Activated CD4-positive, alpha-beta memory T cell treated with anti-CD3 and anti-CD28 coated beads, Interleukin-2, amount 10 ng/mL, durations not matched to agents 7 days and 5 days (primary cell): ENCODE measurements at regions of chr22 and their contacts with region 1.

Region 1: DNA sequence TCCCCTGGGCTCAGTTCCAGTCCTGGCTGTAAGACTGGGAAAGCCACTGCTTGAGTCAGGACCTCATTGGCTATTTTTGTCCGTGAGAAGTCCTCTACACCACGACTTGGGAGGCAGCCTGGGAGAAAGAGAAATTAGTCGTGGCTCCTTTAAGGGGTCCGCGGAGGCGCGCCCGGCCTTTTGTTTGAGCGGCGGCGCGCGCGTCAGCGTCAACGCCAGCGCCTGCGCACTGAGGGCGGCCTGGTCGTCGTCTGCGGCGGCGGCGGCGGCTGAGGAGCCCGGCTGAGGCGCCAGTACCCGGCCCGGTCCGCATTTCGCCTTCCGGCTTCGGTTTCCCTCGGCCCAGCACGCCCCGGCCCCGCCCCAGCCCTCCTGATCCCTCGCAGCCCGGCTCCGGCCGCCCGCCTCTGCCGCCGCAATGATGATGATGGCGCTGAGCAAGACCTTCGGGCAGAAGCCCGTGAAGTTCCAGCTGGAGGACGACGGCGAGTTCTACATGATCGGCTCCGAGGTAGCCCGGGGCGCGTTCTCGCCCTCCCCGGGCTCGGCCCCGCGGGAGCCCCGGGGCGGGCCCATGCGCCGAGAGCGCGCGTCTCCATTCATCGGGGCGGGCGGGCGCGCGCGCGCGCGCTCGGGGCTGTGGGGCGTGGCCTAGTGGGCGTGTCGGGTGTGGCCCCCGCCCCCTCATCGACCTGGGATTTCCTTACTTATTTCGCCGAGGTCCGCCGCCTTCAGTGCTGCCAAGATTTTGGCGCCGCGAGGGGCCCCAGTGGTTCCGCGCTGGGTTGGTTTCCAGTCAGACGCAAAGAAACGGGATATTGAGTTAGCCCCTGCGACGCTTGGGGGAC is at the start of gene SMARCB1:
- DNase-seq: peak; percentile 92
- H3K4me3 Mint-ChIP-seq: peak within 1 kb of the TSS; percentile 88
- H3K27ac Mint-ChIP-seq: peak within 1 kb of the TSS; percentile 91
- H3K4me1 Mint-ChIP-seq: peaks cover 37% of the 10 kb centered on the region
- H3K27me3 Mint-ChIP-seq: no peaks in the 10 kb centered on the region
- total RNA-seq, gene SMARCB1: 65.6 to 66.9 TPM

Region 2: GRCh38 chr22:23774743-23775566 is 12.0 kb before region 1 on chr22:
- CTCF ChIA-PET with region 1: interaction called, 4 read pairs
- POLR2A ChIA-PET with region 1: interaction called, 17 read pairs
- DNase-seq: no peak
- H3K4me3 Mint-ChIP-seq: no peak overlapping the region
- H3K27ac Mint-ChIP-seq: no peak overlapping the region
- H3K4me1 Mint-ChIP-seq: peaks cover 18% of the 10 kb centered on the region
- H3K27me3 Mint-ChIP-seq: peaks cover 16% of the 10 kb centered on the region

Region 3: GRCh38 chr22:23800297-23801237 is 13.6 kb after region 1 on chr22:
- CTCF ChIA-PET with region 1: no interaction called
- POLR2A ChIA-PET with region 1: no interaction called
- DNase-seq: no peak
- H3K4me3 Mint-ChIP-seq: no peak overlapping the region
- H3K27ac Mint-ChIP-seq: no peak overlapping the region
- H3K4me1 Mint-ChIP-seq: no peaks in the 10 kb centered on the region
- H3K27me3 Mint-ChIP-seq: no peaks in the 10 kb centered on the region

Region 4: GRCh38 chr22:23820748-23821211 is 33.8 kb after region 1 on chr22:
- CTCF ChIA-PET with region 1: no interaction called
- POLR2A ChIA-PET with region 1: interaction called, 14 read pairs
- DNase-seq: peak; percentile 67
- H3K4me3 Mint-ChIP-seq: no peak overlapping the region
- H3K27ac Mint-ChIP-seq: peak overlapping the region; percentile 91
- H3K4me1 Mint-ChIP-seq: peaks cover 44% of the 10 kb centered on the region
- H3K27me3 Mint-ChIP-seq: no peaks in the 10 kb centered on the region